ENCODE measurements at regions of chr4 and their contacts with region 1.

Region 1: DNA sequence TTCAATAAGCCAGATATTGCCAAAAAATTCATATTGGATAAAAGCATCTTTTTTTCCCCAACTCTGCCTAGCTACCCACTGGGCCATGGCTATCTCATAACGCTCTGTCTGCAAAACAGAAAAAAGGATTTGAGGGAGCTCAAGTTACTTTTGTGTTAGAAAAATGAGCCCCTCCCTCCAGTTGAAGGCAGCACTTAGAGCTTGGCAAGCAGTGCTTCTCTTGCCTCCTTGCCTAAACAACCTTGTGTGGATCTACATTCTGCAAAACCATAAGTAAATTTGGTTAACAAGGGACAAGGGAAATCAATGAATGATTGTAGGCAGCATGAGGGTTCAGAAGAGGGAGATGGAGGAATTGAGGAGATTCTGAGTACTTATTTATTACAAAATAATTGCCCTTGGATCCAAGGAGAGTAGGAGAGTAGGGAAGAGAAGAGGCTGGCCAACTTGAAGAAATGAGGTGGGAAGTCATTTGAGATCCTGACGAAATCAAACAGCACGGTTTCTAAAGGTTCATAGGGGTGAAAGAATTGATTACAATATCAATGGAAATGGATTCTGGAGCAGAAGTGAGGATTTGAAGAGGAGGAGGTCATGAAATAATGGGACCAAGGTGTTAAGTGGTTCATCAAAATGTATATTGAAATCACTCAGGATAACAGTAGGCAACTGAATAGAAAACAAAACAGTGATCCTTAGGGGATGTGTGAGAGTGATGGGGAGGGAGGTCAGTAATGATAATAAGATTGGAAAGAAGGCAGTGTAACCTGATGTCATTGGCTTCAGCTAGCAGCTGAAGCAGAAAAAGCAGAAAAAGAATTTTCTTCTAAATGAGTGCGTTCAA is 434.8 kb upstream of the IGFBP7 start:
- DNase-seq: no peak
- H3K4me3 ChIP-seq: no peak overlapping the region
- H3K27ac ChIP-seq: no peak overlapping the region
- H3K4me1 ChIP-seq: no peaks in the 10 kb centered on the region
- H3K27me3 ChIP-seq: no peaks in the 10 kb centered on the region
- CTCF ChIP-seq: no peak
- EP300 ChIP-seq: no peak
- POLR2A ChIP-seq: no peak

Region 2: GRCh38 chr4:57679969-57680368 is 134.9 kb after region 1 on chr4:
- intact Hi-C with region 1: loop called (anchors 5 kb)
- DNase-seq: no peak
- H3K4me3 ChIP-seq: no peak overlapping the region
- H3K27ac ChIP-seq: no peak overlapping the region
- H3K4me1 ChIP-seq: no peaks in the 10 kb centered on the region
- H3K27me3 ChIP-seq: no peaks in the 10 kb centered on the region
- CTCF ChIP-seq: no peak
- EP300 ChIP-seq: no peak
- POLR2A ChIP-seq: no peak